Caco-2 (cell line): ENCODE measurements at regions of chr16 and their contacts with region 1.

Region 1: DNA sequence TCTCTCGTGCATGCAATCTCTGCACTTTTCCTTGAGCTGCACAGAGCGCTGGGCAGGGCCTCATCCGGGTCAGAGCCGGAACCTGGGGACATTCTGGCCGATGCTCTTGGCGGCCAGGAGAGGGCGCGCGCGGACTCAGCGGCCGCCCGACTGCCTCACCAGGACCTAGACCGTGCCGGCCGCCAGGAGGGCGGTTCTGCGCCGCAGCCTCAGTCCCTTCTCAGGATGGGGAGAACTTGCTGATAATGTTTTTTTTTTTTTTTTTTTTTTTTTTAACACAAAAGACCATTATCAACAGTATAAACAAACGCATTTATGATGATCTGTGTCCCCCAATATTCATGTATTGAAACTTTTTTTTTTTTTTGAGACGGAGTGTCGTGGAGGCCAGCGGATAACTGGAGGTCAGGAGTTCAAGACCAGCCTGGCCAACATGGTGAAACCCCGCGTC is 8.1 kb upstream of the FLYWCH2 start:
- DNase-seq: peak; percentile 65 to 66
- H3K4me3 ChIP-seq: no peak overlapping the region
- H3K4me3 Mint-ChIP-seq: no peak overlapping the region
- H3K27ac Mint-ChIP-seq: no peak overlapping the region
- H3K4me1 ChIP-seq: no peaks in the 10 kb centered on the region
- H3K4me1 Mint-ChIP-seq: no peaks in the 10 kb centered on the region
- H3K27me3 ChIP-seq: no peaks in the 10 kb centered on the region
- H3K27me3 Mint-ChIP-seq: peaks cover under 1% of the 10 kb centered on the region
- CTCF ChIP-seq: peak; percentile 87 to 88

Region 2: GRCh38 chr16:2771496-2772402 is 103.2 kb before region 1 on chr16:
- CTCF ChIA-PET with region 1: interaction called, 10 read pairs
- POLR2A ChIA-PET with region 1: no interaction called
- intact Hi-C with region 1: no loop called
- DNase-seq: no peak
- H3K4me3 ChIP-seq: no peak overlapping the region
- H3K4me3 Mint-ChIP-seq: no peak overlapping the region
- H3K27ac Mint-ChIP-seq: peak overlapping the region; percentile 25
- H3K4me1 ChIP-seq: 0 out of 2 replicates have a peak, but pooled peaks cover 8% of the 10 kb centered on the region
- H3K4me1 Mint-ChIP-seq: peaks cover 22% of the 10 kb centered on the region
- H3K27me3 ChIP-seq: no peaks in the 10 kb centered on the region
- H3K27me3 Mint-ChIP-seq: no peaks in the 10 kb centered on the region
- CTCF ChIP-seq: no peak

Region 3: DNA sequence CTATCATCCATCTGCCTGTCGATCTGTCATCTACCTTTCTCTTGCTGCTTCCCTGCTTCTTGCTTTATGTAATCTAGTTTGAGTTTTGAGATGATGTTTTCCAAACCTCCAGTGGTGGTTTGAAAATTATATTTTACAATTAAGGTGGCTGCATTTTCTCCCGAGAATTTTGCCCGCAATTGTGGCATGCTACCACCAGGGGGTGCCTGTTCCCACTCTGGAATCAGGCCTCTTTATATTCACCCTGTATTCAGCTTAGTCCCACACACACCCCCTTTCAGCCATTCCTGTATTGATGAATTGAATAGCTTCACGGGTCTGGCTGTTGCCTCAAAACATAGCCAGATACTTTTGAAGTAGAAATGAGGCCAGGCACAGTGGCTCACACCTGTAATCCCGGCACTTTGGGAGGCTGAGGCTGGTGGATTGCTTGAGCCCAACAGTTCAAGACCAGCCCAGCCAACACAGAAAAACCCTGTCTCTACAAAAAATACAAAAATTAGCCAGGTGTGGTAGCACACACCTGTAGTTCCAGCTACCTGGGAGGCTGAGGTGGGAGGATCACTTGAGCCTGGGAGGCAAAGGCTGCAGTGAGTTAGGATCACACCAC is 20.1 kb before region 1 on chr16:
- CTCF ChIA-PET with region 1: interaction called, 10 read pairs
- POLR2A ChIA-PET with region 1: interaction called, 3 read pairs
- intact Hi-C with region 1: no loop called
- DNase-seq: no peak
- H3K4me3 ChIP-seq: no peak overlapping the region
- H3K4me3 Mint-ChIP-seq: peak overlapping the region; percentile 20
- H3K27ac Mint-ChIP-seq: peak overlapping the region; percentile 87
- H3K4me1 ChIP-seq: peaks cover 10% of the 10 kb centered on the region; the same call in 1 of the 2 replicates
- H3K4me1 Mint-ChIP-seq: peaks cover 15% of the 10 kb centered on the region
- H3K27me3 ChIP-seq: no peaks in the 10 kb centered on the region
- H3K27me3 Mint-ChIP-seq: no peaks in the 10 kb centered on the region
- CTCF ChIP-seq: peak; percentile 69 to 82

Region 4: DNA sequence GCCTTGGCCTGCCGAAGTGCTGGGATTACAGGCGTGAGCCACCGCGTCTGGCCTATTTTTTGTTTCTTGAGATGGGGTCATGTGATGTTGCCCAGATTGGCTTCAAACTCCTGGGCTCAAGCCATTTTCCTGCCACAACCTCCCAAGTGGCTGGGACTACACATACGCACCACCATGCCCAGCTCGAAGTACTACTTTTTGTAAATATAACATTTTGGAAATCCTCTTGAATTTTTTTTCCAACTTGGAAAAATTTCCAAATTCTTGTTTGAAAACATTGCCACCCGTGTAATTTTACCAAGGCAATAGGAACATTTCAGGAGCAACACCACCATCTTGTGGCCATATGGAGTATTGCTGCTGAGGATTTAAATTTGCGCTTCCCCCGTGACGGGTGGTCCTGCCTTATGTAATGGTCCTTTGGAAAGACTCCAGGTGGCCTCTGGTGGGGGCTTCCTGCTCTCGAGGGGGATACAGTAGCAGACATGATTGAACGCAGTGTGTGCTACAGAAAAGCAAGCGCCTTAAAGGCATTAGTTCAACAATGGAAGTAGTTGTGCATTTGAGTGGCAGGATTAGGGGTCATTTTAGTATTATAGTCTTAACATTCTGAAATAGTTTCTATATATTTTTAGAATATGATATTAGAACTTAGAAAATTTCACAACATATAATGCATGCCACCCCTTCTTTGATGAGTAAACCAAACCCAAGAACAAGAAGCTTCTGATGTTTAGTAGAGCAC is 44.7 kb after region 1 on chr16:
- CTCF ChIA-PET with region 1: no interaction called
- POLR2A ChIA-PET with region 1: no interaction called
- intact Hi-C with region 1: loop called (anchors 5 kb)
- DNase-seq: peak in 1 of 2 experiments; percentile 59
- H3K4me3 ChIP-seq: no peak overlapping the region
- H3K4me3 Mint-ChIP-seq: no peak overlapping the region
- H3K27ac Mint-ChIP-seq: no peak overlapping the region
- H3K4me1 ChIP-seq: no peaks in the 10 kb centered on the region
- H3K4me1 Mint-ChIP-seq: no peaks in the 10 kb centered on the region
- H3K27me3 ChIP-seq: no peaks in the 10 kb centered on the region
- H3K27me3 Mint-ChIP-seq: no peaks in the 10 kb centered on the region
- CTCF ChIP-seq: peak; percentile 77 to 83

Region 5: GRCh38 chr16:2926650-2927646 is 52.0 kb after region 1 on chr16:
- CTCF ChIA-PET with region 1: interaction called, 4 read pairs
- POLR2A ChIA-PET with region 1: no interaction called
- intact Hi-C with region 1: loop called (anchors 2 kb)
- DNase-seq: peak; percentile 77 to 83
- H3K4me3 ChIP-seq: no peak overlapping the region
- H3K4me3 Mint-ChIP-seq: peak overlapping the region; percentile 44
- H3K27ac Mint-ChIP-seq: peak overlapping the region; percentile 23
- H3K4me1 ChIP-seq: peaks cover 13% of the 10 kb centered on the region
- H3K4me1 Mint-ChIP-seq: no peaks in the 10 kb centered on the region
- H3K27me3 ChIP-seq: no peaks in the 10 kb centered on the region
- H3K27me3 Mint-ChIP-seq: no peaks in the 10 kb centered on the region
- CTCF ChIP-seq: peak; percentile 85 to 90